ENCODE measurements at regions of chr19 and their contacts with region 1.

Region 1: DNA sequence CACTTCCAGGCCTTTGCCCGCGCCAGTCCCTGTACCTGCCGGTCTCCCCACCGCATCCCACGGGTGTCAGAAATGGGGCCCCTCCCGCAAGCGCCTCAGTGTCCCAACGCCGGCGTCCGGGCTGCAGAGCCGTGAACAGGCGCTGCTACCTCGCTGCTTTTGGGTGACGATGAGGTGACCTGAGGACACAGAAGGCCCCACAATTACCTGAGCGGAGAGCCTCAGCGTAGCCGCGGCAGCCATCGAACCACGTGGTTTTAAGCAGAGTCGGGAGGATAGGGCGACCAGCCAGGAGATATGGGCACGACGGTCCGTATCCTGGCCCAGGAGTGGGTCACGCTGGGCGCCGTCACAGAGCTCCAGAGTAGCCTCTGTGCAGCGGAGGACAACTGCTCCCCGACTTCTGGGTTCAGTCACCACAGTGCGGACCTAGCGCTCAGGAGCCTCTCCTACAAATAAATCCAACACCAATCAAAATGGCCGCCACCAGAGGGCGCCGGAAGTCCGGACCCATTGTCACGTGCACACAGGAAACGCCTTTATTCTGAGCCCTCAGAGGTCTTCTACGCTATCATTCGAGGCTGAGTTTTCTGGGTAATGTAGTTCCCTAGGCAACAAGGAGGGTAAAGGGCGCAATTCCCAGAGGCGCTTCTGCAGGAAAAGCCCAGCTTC is at the start of gene ZNF814:
- DNase-seq: peak; percentile 69 to 79
- H3K4me3 ChIP-seq: peak within 1 kb of the TSS; percentile 89
- H3K27ac ChIP-seq: no peak within 1 kb of the TSS
- H3K4me1 ChIP-seq: 0 out of 2 replicates have a peak, but pooled peaks cover 5% of the 10 kb centered on the region
- H3K27me3 ChIP-seq: no peaks in the 10 kb centered on the region
- CTCF ChIP-seq: peak; percentile 76
- total RNA-seq, gene ZNF814: 8.6 and 12.2 TPM in 2 replicates

Region 2: GRCh38 chr19:57841122-57841763 is 47.5 kb before region 1 on chr19:
- CTCF ChIA-PET with region 1: no interaction called
- POLR2A ChIA-PET with region 1: no interaction called
- intact Hi-C with region 1: no loop called
- DNase-seq: no peak
- H3K4me3 ChIP-seq: no peak overlapping the region
- H3K27ac ChIP-seq: no peak overlapping the region
- H3K4me1 ChIP-seq: no peaks in the 10 kb centered on the region
- H3K27me3 ChIP-seq: no peaks in the 10 kb centered on the region
- CTCF ChIP-seq: no peak

Region 3: GRCh38 chr19:57867868-57868492 is 20.7 kb before region 1 on chr19:
- CTCF ChIA-PET with region 1: no interaction called
- POLR2A ChIA-PET with region 1: interaction called, 13 read pairs
- intact Hi-C with region 1: no loop called
- DNase-seq: no peak
- H3K4me3 ChIP-seq: no peak overlapping the region
- H3K27ac ChIP-seq: no peak overlapping the region
- H3K4me1 ChIP-seq: no peaks in the 10 kb centered on the region
- H3K27me3 ChIP-seq: no peaks in the 10 kb centered on the region
- CTCF ChIP-seq: no peak

Region 4: GRCh38 chr19:58037927-58038687 is 149.4 kb after region 1 on chr19:
- CTCF ChIA-PET with region 1: no interaction called
- POLR2A ChIA-PET with region 1: no interaction called
- intact Hi-C with region 1: no loop called
- DNase-seq: no peak
- H3K4me3 ChIP-seq: no peak overlapping the region
- H3K27ac ChIP-seq: no peak overlapping the region
- H3K4me1 ChIP-seq: no peaks in the 10 kb centered on the region
- H3K27me3 ChIP-seq: peaks cover 59% of the 10 kb centered on the region
- CTCF ChIP-seq: no peak

Measured in PC-9 (cell line).